AG04449 (cell line): ENCODE measurements at regions of chr12 and their contacts with region 1.

Region 1: DNA sequence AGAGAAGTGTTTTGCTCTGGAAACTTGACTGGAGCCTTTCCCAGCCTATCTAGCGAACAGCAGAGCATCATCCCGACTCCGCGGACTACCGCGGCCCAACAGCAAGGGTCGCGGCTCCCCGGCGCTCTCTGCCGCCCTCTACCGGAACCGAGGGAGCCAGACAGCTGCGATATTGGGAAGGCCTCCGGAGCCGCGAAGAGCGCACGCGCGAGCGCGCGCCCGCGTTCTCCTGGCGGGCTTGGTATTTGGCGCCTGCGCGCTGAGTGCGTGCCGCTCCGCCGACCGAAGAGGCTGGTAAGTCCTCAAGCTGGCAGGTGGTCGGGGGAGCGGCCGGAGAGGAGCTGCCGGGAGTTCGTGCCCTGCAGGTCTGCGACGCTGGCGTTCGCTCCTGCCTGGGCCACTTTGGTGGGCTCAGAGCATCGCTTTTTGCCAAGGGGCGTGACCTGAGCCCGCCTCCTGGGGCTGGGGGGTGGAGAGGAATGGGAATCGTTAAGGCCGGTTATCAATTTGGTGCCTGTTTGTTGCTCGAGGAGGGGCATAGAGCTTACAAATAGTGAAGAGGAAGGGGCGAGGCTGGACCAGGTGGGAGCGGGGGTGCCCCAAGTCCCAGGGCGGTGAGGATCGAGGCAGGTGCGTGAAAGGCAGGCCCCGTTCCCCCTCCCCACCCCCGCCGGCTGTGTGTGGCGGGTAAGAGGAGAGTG is at the start of gene TMEM106C:
- DNase-seq: peak; percentile 38
- H3K4me3 ChIP-seq: peak within 1 kb of the TSS; percentile 97
- CTCF ChIP-seq: peak; percentile 99

Region 2: GRCh38 chr12:47509398-47509851 is 454.1 kb before region 1 on chr12:
- CTCF ChIA-PET with region 1: no interaction called
- POLR2A ChIA-PET with region 1: no interaction called
- DNase-seq: peak; percentile 70
- H3K4me3 ChIP-seq: no peak overlapping the region
- CTCF ChIP-seq: no peak

Region 3: GRCh38 chr12:47856094-47856493 is 107.4 kb before region 1 on chr12:
- CTCF ChIA-PET with region 1: no interaction called
- POLR2A ChIA-PET with region 1: no interaction called
- DNase-seq: no peak
- H3K4me3 ChIP-seq: no peak overlapping the region
- CTCF ChIP-seq: no peak

Region 4: GRCh38 chr12:47870175-47870781 is 93.2 kb before region 1 on chr12:
- CTCF ChIA-PET with region 1: interaction called, 10 read pairs
- POLR2A ChIA-PET with region 1: no interaction called
- DNase-seq: no peak
- H3K4me3 ChIP-seq: no peak overlapping the region
- CTCF ChIP-seq: peak; percentile 46

Region 5: GRCh38 chr12:47916546-47916945 is 46.9 kb before region 1 on chr12:
- CTCF ChIA-PET with region 1: interaction called, 10 read pairs
- POLR2A ChIA-PET with region 1: no interaction called
- DNase-seq: no peak
- H3K4me3 ChIP-seq: no peak overlapping the region
- CTCF ChIP-seq: no peak

Region 6: DNA sequence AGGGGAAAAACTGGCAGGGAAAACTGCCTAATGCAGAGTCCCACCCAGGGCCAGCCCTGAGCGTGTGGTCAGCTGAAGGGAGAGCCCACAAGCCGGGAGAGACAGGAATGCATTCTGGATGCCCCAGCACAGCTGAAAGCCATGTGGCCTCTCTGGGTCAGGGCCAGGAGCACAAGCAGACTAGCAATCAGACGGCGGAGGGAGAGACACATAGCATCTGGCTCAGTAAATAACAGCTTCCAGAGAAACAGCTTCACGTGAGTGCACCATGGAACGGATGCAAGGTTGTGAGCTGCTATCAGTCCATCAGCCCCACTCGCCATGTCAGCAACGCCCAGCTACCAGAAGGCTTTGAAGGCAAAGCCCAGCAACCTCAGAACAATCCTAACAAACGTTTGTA is 28.3 kb before region 1 on chr12:
- CTCF ChIA-PET with region 1: interaction called, 18 read pairs
- POLR2A ChIA-PET with region 1: no interaction called
- DNase-seq: peak; percentile 58
- H3K4me3 ChIP-seq: no peak overlapping the region
- CTCF ChIP-seq: no peak

Region 7: DNA sequence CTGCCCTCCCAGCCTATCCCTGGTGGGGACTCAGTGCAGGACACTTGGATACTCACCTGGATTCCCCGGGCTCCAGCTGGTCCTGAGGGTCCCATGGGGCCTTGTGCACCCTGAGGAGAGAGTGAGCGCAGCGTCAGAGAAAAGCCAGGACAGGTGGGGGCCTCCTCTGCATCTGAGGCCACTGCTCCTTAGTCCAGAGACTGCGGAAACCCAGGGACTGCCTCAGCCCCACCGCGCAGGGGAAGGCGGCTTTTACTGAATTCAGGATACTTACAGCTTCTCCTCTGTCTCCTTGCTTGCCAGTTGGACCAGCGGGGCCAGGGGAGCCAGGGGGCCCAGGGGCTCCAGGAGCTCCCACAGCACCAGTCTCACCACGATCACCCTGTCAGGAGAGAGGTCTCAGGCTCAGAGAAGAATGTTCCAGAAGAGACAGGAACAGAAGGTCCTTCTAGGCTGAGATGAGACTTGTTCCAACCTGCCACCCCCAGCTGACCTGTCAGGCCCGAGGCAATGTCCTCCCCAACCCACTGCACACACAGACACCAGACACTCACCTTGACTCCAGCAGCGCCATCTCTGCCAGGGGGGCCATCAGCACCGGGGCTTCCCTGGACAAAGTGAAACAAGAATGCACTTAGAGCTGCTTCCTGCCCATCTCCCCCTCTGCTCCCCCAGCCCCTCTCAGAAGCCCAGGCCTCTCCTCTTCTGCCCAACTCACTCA is 13.7 kb after region 1 on chr12:
- CTCF ChIA-PET with region 1: interaction called, 22 read pairs
- POLR2A ChIA-PET with region 1: interaction called, 3 read pairs
- DNase-seq: no peak
- H3K4me3 ChIP-seq: no peak overlapping the region
- CTCF ChIP-seq: no peak

Region 8: GRCh38 chr12:48040354-48040753 is 76.9 kb after region 1 on chr12:
- CTCF ChIA-PET with region 1: no interaction called
- POLR2A ChIA-PET with region 1: no interaction called
- DNase-seq: no peak
- H3K4me3 ChIP-seq: no peak overlapping the region
- CTCF ChIP-seq: no peak